RWPE1 (cell line): ENCODE measurements at regions of chr9 and their contacts with region 1.

Region 1: DNA sequence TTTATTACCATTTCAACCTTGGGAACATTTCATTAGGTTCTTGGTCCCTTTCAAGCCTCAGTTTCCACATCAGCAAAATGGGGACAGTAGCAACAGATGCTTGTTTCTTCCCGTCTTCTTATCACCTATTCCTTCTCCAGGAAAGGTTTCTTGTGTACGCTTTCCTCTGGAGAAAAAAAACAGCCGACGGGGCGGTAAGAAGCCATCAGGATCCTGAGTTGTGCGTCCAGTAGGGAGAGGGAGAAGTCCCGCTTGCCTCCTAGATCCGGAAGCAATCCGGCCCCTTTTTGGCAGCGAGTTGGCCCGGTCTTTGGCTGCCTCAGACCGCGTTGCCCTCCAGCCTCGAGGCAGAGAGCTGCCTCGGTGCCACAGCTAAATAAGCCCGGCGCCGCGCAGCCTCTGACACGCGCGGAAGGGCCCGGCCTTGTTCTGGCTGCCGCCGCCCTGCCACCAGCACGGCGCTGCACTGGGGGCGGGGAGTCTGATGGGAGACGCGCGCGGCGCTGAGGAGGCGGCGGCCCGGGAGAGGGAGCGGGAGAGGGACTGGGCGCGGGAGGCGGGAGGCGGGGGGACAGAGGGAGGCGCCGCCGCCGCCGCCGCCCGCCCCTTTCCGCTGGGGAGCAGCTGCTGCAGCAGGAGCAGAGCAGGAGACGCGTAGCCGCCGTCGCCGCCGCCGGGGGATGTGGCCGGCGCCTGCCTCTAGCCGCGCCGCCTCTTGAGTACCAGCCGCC is at the start of gene SLC44A1:
- DNase-seq: peak; percentile 93
- H3K27ac ChIP-seq: peak within 1 kb of the TSS; percentile 83
- CTCF ChIP-seq: no peak

Region 2: GRCh38 chr9:105254226-105254625 is 10.1 kb after region 1 on chr9:
- CTCF ChIA-PET with region 1: no interaction called
- POLR2A ChIA-PET with region 1: no interaction called
- DNase-seq: peak; percentile 57
- H3K27ac ChIP-seq: 0 out of 2 replicates have a peak overlapping the region, but pooled peaks have one; percentile 26
- CTCF ChIP-seq: no peak

Region 3: GRCh38 chr9:105281926-105282325 is 37.8 kb after region 1 on chr9:
- CTCF ChIA-PET with region 1: interaction called, 4 read pairs
- POLR2A ChIA-PET with region 1: interaction called, 11 read pairs
- DNase-seq: peak; percentile 53
- H3K27ac ChIP-seq: no peak overlapping the region
- CTCF ChIP-seq: no peak

Region 4: GRCh38 chr9:105414947-105415661 is 170.9 kb after region 1 on chr9:
- CTCF ChIA-PET with region 1: interaction called, 15 read pairs
- POLR2A ChIA-PET with region 1: interaction called, 4 read pairs
- DNase-seq: peak; percentile 74
- H3K27ac ChIP-seq: no peak overlapping the region
- CTCF ChIP-seq: peak; percentile 96